ENCODE measurements at regions of chr14 and their contacts with region 1.

Region 1: DNA sequence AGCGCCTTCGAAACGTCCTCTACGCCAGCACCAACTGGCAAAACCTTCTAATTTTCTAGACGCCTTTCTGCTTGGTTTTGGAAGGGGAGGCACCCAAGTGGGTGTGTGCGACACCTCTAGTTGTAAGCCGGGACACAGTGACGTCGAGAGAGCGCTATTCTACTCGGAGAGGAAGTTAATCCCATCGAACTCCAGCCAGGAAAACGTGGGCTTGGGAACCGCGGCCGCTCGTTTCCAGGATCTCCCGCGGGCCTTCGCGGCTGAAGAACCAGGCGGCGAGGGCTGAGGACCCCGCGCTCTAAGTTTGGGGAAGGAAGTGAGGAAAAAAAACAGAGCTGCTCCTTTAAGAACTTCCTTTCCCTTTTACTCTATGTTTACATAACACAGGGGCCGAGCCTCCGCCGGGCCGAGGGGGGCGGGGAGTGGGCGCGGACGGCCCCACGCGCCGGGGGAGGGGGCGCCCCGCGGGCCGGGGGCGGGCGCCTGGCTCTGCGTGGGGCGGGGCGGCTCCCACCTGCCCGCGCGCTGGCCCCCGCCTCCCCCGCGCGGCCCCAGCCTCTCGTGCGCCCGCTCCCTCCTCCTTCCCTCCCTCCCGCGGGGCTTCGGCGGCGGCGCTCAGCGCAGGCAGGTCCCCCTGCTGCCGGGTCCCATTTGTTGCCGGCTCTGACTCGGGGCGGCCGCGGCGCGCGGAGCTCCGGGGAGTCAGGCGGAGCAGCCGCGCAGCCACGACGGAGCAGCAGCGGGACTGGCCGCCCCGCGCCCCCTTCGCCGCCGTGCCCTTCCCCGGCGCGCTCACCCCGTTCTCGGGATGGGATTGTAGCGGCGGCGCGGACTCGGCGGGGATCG is at the start of gene PELI2:
- DNase-seq: peak; percentile 93
- ATAC-seq: peak; percentile 89
- H3K4me3 ChIP-seq: peak within 1 kb of the TSS; percentile 60 to 93 (median 83)
- H3K4me3 Mint-ChIP-seq: peak within 1 kb of the TSS; percentile 96
- H3K27ac ChIP-seq: peak within 1 kb of the TSS; percentile 68 to 94
- H3K27ac Mint-ChIP-seq: peak within 1 kb of the TSS; percentile 98
- H3K4me1 ChIP-seq: peaks cover 18 to 31% of the 10 kb centered on the region in 2 donors
- H3K4me1 Mint-ChIP-seq: peaks cover 55% of the 10 kb centered on the region
- H3K27me3 ChIP-seq: peaks cover 0 to 4% (median 0%) of the 10 kb centered on the region in 4 experiments
- H3K27me3 Mint-ChIP-seq: peaks cover 3% of the 10 kb centered on the region
- CTCF ChIP-seq: no peak
- total RNA-seq, gene PELI2: 13.4 and 18.9 TPM in 2 replicates

Region 2: GRCh38 chr14:54509546-54510501 is 1608.2 kb before region 1 on chr14 and contains the start of gene CGRRF1:
- CTCF ChIA-PET with region 1: no interaction called
- POLR2A ChIA-PET with region 1: no interaction called
- intact Hi-C with region 1: loop called (anchors 2 kb)
- DNase-seq: peak; percentile 98
- ATAC-seq: peak; percentile 98
- H3K4me3 ChIP-seq: peak within 1 kb of the TSS; percentile 79 to 99 (median 96)
- H3K4me3 Mint-ChIP-seq: peak within 1 kb of the TSS; percentile 98
- H3K27ac ChIP-seq: peak within 1 kb of the TSS; percentile 81
- H3K27ac Mint-ChIP-seq: peak within 1 kb of the TSS; percentile 94
- H3K4me1 ChIP-seq: peaks cover 21 to 25% of the 10 kb centered on the region in 2 donors
- H3K4me1 Mint-ChIP-seq: peaks cover 44% of the 10 kb centered on the region
- H3K27me3 ChIP-seq: no peaks in the 10 kb centered on the region
- H3K27me3 Mint-ChIP-seq: no peaks in the 10 kb centered on the region
- CTCF ChIP-seq: peak; percentile 57
- total RNA-seq, gene CGRRF1: 15.8 and 17.9 TPM in 2 replicates

Region 3: DNA sequence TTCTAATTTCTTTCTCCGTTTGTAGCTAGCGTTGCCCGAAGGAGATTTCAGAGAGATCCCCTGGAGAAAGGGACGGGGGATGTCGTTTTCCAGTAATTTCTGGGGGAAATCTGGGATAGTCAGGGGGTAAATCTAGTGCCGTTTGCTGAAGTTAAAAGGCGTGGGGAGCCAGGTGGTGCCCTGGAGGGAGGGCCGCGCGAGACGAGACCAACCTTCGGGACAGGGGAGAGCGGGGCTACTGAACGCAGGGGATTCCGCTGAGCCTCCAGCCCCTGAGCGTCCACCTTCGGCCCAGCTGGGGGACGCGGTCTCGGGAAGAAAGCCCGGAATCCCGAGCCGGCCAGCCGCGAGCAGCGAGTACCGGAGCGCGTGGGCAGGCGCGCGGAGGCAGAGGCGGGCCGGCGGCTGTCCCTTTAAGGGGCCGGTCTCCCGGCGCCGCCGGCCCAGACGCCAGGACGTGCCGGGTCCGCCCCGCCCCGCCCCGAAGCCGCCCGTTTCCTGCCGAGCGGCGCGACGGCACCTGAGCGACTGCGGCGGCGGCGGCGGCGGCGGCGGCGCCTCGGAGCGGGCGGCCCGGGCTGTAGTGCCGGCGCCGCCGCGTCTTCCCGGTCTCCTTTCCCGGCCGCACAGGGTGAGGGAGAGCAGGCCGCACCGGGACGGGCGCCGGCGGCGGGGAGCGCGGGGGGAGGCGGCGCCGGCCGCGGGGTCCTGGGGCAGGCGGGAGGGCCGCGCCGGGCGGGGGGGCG is 538.1 kb before region 1 on chr14 and contains the start of gene KTN1:
- CTCF ChIA-PET with region 1: no interaction called
- POLR2A ChIA-PET with region 1: no interaction called
- intact Hi-C with region 1: loop called (anchors 1 kb)
- DNase-seq: peak; percentile 91
- ATAC-seq: peak; percentile 90
- H3K4me3 ChIP-seq: peak within 1 kb of the TSS; percentile 72 to 96 (median 85)
- H3K4me3 Mint-ChIP-seq: peak within 1 kb of the TSS; percentile 96
- H3K27ac ChIP-seq: peak within 1 kb of the TSS; percentile 59 to 91
- H3K27ac Mint-ChIP-seq: peak within 1 kb of the TSS; percentile 96
- H3K4me1 ChIP-seq: peaks cover 37 to 39% of the 10 kb centered on the region in 2 donors
- H3K4me1 Mint-ChIP-seq: peaks cover 29% of the 10 kb centered on the region
- H3K27me3 ChIP-seq: no peaks in the 10 kb centered on the region
- H3K27me3 Mint-ChIP-seq: no peaks in the 10 kb centered on the region
- CTCF ChIP-seq: no peak
- total RNA-seq, gene KTN1: 120 and 123 TPM in 2 replicates

Region 4: GRCh38 chr14:55864890-55865655 is 252.9 kb before region 1 on chr14:
- CTCF ChIA-PET with region 1: no interaction called
- POLR2A ChIA-PET with region 1: no interaction called
- intact Hi-C with region 1: no loop called
- DNase-seq: no peak
- ATAC-seq: no peak
- H3K4me3 ChIP-seq: no peak overlapping the region
- H3K4me3 Mint-ChIP-seq: no peak overlapping the region
- H3K27ac ChIP-seq: no peak overlapping the region
- H3K27ac Mint-ChIP-seq: no peak overlapping the region
- H3K4me1 ChIP-seq: peaks cover 0 to 21% of the 10 kb centered on the region in 2 donors
- H3K4me1 Mint-ChIP-seq: peaks cover 19% of the 10 kb centered on the region
- H3K27me3 ChIP-seq: no peaks in the 10 kb centered on the region
- H3K27me3 Mint-ChIP-seq: peaks cover 13% of the 10 kb centered on the region
- CTCF ChIP-seq: peak; percentile 13

Region 5: DNA sequence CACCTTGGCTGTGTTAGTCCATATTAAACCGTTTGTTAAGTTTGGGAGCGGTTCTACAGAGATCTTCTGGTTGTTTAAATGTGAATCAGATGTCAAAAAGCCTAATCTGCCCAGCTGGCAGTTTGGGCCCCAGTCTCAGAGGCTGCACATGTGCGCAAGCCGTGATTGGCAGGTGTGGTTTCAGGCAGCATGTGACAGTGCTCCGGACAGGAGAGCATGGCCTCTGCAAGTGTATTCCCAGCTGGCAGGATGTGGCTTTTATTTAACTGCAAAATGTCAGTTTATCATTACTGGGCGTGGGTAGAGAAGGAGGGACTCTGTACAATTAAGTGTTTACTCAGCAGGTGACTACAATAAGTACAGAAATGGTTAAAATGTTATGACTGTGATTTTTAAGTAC is 77.7 kb after region 1 on chr14:
- CTCF ChIA-PET with region 1: no interaction called
- POLR2A ChIA-PET with region 1: no interaction called
- intact Hi-C with region 1: loop called (anchors 5 kb)
- DNase-seq: peak; percentile 32
- ATAC-seq: peak; percentile 81
- H3K4me3 ChIP-seq: peak overlapping the region in 1 of 5 experiments; percentile 7
- H3K4me3 Mint-ChIP-seq: peak overlapping the region; percentile 28
- H3K27ac ChIP-seq: peak overlapping the region in 1 of 2 donors; percentile 11
- H3K27ac Mint-ChIP-seq: peak overlapping the region; percentile 12
- H3K4me1 ChIP-seq: peaks cover 25% of the 10 kb centered on the region in 2 donors
- H3K4me1 Mint-ChIP-seq: peaks cover 26% of the 10 kb centered on the region
- H3K27me3 ChIP-seq: no peaks in the 10 kb centered on the region
- H3K27me3 Mint-ChIP-seq: no peaks in the 10 kb centered on the region
- CTCF ChIP-seq: no peak

Region 6: GRCh38 chr14:57268161-57269069 is 1150.4 kb after region 1 on chr14 and contains the starts of genes AP5M1 and EXOC5:
- CTCF ChIA-PET with region 1: no interaction called
- POLR2A ChIA-PET with region 1: no interaction called
- intact Hi-C with region 1: loop called (anchors 2 kb)
- DNase-seq: peak; percentile 96
- ATAC-seq: peak; percentile 79
- H3K4me3 ChIP-seq: peak within 1 kb of the TSS; percentile 77 to 98 (median 86)
- H3K4me3 Mint-ChIP-seq: peak within 1 kb of the TSS; percentile 100
- H3K27ac ChIP-seq: peak within 1 kb of the TSS; percentile 74 to 90
- H3K27ac Mint-ChIP-seq: peak within 1 kb of the TSS; percentile 100
- H3K4me1 ChIP-seq: peaks cover 20% of the 10 kb centered on the region in 2 donors
- H3K4me1 Mint-ChIP-seq: peaks cover 48% of the 10 kb centered on the region
- H3K27me3 ChIP-seq: no peaks in the 10 kb centered on the region
- H3K27me3 Mint-ChIP-seq: no peaks in the 10 kb centered on the region
- CTCF ChIP-seq: no peak
- total RNA-seq, gene AP5M1: 53.6 and 54.9 TPM in 2 replicates
- total RNA-seq, gene EXOC5: 56.6 and 60.0 TPM in 2 replicates